T-cell (primary cell): ENCODE measurements at regions of chr21 and their contacts with region 1.

Region 1: GRCh38 chr21:42238185-42238934 is 19.4 kb downstream of the ABCG1 start:
- DNase-seq: peak in 33 of 35 experiments; percentile 29 to 83 (median 66)
- ATAC-seq: peak; percentile 26 to 41 (median 36)
- H3K4me3 ChIP-seq: peak overlapping the region in 1 of 2 donors; percentile 2
- H3K4me3 Mint-ChIP-seq: peak overlapping the region; percentile 10 to 86 (median 22)
- H3K27ac ChIP-seq: peak overlapping the region; percentile 84
- H3K27ac Mint-ChIP-seq: peak overlapping the region; percentile 78 to 79
- H3K4me1 ChIP-seq: peaks cover 54 to 75% of the 10 kb centered on the region in 2 experiments
- H3K4me1 Mint-ChIP-seq: peaks cover 69 to 77% (median 73%) of the 10 kb centered on the region in 3 donors
- H3K27me3 ChIP-seq: no peaks in the 10 kb centered on the region
- H3K27me3 Mint-ChIP-seq: no peaks in the 10 kb centered on the region

Region 2: GRCh38 chr21:42164064-42164789 is 74.1 kb before region 1 on chr21:
- CTCF ChIA-PET with region 1: interaction called, 3 to 11 read pairs
- POLR2A ChIA-PET with region 1: no interaction called
- DNase-seq: peak in 29 of 35 experiments; percentile 14 to 71 (median 40)
- ATAC-seq: peak; percentile 62 to 74 (median 67)
- H3K4me3 ChIP-seq: no peak overlapping the region
- H3K4me3 Mint-ChIP-seq: no peak overlapping the region
- H3K27ac ChIP-seq: no peak overlapping the region
- H3K27ac Mint-ChIP-seq: peak overlapping the region in 1 of 2 donors; percentile 1
- H3K4me1 ChIP-seq: peaks cover 25 to 35% of the 10 kb centered on the region in 2 experiments
- H3K4me1 Mint-ChIP-seq: peaks cover 37 to 48% (median 44%) of the 10 kb centered on the region in 3 donors
- H3K27me3 ChIP-seq: peaks cover 0 to 11% of the 10 kb centered on the region in 2 experiments
- H3K27me3 Mint-ChIP-seq: no peaks in the 10 kb centered on the region

Region 3: DNA sequence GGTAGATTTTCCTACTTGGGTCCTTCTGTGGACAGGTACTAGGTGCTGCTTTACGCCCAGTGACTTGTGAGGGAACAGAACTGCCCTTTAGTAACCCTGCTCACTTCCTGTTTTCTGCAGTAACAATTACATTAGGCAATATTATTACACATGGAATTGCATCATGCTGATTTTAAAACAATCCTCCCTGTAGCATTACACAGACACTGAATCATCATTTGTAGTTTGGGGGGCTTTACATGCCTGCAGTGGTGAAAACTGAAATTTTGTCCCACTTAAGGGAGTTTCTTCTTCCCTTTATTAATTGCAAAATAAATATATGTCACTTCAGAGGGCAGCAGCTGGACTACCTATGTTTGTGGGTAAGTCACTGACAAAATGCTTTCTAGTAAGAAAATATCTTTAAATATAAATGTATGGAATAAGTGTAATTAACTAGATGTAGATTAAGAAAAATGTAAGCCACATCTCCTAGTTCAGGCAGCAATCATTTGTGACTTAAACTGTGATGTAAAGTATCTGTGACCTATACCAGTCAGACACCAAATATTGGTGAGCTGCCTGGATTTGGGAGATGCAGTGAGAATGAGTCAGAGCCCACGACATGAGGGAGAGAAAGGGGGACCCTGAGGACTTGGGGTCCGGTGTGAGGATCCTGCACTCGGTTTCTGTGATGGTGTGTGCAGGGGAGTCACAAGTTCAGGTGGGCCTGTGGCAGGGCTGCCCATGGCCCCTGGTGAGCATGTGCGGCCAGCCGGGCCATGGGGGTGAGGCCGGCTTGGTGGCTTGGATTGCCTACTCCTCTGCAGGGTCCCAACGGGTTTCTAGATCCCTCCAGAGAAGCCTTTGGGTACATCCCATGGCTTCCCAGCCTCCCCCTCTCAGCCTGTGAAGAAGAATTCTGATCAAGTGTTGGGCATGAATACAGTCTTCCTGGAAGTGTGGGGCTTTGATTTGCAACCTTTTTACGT is 38.6 kb before region 1 on chr21:
- CTCF ChIA-PET with region 1: interaction called in 1 of 2 experiments, 10 read pairs
- POLR2A ChIA-PET with region 1: interaction called in 1 of 2 experiments, 3 read pairs
- DNase-seq: peak in 11 of 35 experiments; percentile 10 to 66 (median 27)
- ATAC-seq: peak; percentile 76 to 86 (median 84)
- H3K4me3 ChIP-seq: no peak overlapping the region
- H3K4me3 Mint-ChIP-seq: peak overlapping the region in 2 of 3 donors; percentile 43 to 62
- H3K27ac ChIP-seq: peak overlapping the region; percentile 14
- H3K27ac Mint-ChIP-seq: peak overlapping the region; percentile 79 to 83
- H3K4me1 ChIP-seq: peaks cover 31 to 44% of the 10 kb centered on the region in 2 experiments
- H3K4me1 Mint-ChIP-seq: peaks cover 52 to 70% (median 58%) of the 10 kb centered on the region in 3 donors
- H3K27me3 ChIP-seq: no peaks in the 10 kb centered on the region
- H3K27me3 Mint-ChIP-seq: no peaks in the 10 kb centered on the region

Region 4: DNA sequence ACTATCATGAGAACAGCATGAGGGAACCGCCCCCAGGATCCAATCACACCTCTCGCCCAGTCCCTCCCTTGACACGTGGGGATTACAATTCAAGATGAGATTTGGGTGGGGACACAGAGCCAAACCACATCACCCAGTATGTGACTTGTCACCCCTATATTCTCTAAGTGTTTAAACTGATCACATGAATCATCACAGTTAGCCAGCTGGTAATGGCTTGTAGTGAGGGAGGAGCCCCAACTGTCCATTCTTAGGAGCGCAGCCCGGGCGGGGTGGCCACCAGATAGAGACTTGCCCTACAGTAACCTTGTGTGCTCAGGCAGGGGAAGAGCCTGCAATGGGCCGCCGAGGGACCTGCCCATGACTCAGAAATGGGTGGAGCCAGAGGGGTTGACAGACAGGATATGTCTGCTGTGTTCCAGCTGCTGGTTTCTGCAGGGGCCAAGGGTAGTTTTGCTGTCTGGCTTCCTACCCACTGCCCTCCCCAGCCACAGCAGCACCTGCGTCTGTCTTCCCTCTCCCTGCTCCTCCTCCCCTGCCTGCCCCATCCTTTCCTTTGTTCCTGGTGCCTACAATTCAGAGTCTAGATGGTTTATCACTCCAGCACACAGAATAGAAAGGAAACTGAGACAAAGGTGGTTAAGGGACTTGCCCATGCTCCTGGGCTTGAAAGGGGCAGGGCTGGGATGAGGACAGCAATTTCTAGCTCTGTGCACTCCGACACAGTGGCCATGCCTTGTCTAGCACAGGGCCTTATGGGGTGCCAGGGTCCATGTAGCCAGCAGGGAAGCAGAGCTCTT is 10.3 kb before region 1 on chr21:
- CTCF ChIA-PET with region 1: interaction called in 1 of 2 experiments, 18 read pairs
- POLR2A ChIA-PET with region 1: interaction called, 6 to 21 read pairs
- DNase-seq: peak; percentile 65 to 96 (median 92)
- ATAC-seq: peak; percentile 90 to 98 (median 98)
- H3K4me3 ChIP-seq: peak overlapping the region; percentile 2 to 33
- H3K4me3 Mint-ChIP-seq: peak overlapping the region; percentile 21 to 54 (median 32)
- H3K27ac ChIP-seq: peak overlapping the region; percentile 92
- H3K27ac Mint-ChIP-seq: peak overlapping the region; percentile 75 to 78
- H3K4me1 ChIP-seq: peaks cover 62 to 71% of the 10 kb centered on the region in 2 experiments
- H3K4me1 Mint-ChIP-seq: peaks cover 73 to 88% (median 81%) of the 10 kb centered on the region in 3 donors
- H3K27me3 ChIP-seq: no peaks in the 10 kb centered on the region
- H3K27me3 Mint-ChIP-seq: no peaks in the 10 kb centered on the region